Aorta (tissue), 5 donors: ENCODE measurements at regions of chr11 and their contacts with region 1.

Region 1: GRCh38 chr11:79092791-79093353 is 348.0 kb downstream of the TENM4 start:
- DNase-seq: peak in 1 of 2 donors; percentile 61
- ATAC-seq: peak; percentile 58
- H3K4me3 ChIP-seq: no peak overlapping the region
- H3K27ac ChIP-seq: no peak overlapping the region
- H3K4me1 ChIP-seq: peaks cover 0 to 4% of the 10 kb centered on the region in 2 donors
- H3K27me3 ChIP-seq: no peaks in the 10 kb centered on the region

Region 2: DNA sequence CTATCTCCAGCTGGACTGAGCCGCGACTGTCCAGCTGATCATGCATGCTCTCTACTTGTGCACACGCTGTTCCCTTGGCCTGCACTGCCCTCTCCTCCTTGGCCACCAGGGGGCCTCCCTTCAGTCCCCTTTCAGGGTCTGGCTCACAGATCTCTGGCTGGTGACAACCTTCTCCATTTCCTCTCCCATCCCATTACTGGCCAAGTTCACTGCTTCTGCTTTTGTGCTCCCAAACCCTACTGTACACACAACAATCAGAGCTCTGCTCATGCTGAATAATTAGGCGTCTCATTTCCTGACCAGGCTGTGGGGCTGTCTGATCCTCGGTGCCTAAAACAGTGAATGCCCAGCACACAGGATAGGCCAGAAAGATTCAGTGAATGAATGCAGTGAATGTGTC is 294.2 kb before region 1 on chr11:
- intact Hi-C with region 1: loop called in 1 of 2 experiments (anchors 10 kb)
- DNase-seq: peak; percentile 89 to 90
- ATAC-seq: peak; percentile 75
- H3K4me3 ChIP-seq: no peak overlapping the region
- H3K27ac ChIP-seq: no peak overlapping the region
- H3K4me1 ChIP-seq: peaks cover 0 to 6% of the 10 kb centered on the region in 2 donors
- H3K27me3 ChIP-seq: no peaks in the 10 kb centered on the region

Region 3: GRCh38 chr11:79201637-79202333 is 108.9 kb after region 1 on chr11:
- intact Hi-C with region 1: no loop called
- DNase-seq: no peak
- ATAC-seq: no peak
- H3K4me3 ChIP-seq: no peak overlapping the region
- H3K27ac ChIP-seq: no peak overlapping the region
- H3K4me1 ChIP-seq: no peaks in the 10 kb centered on the region
- H3K27me3 ChIP-seq: no peaks in the 10 kb centered on the region

Region 4: GRCh38 chr11:79244241-79244772 is 151.4 kb after region 1 on chr11:
- intact Hi-C with region 1: loop called in 1 of 2 experiments (anchors 2 kb)
- DNase-seq: no peak
- ATAC-seq: peak; percentile 78
- H3K4me3 ChIP-seq: no peak overlapping the region
- H3K27ac ChIP-seq: peak overlapping the region; percentile 2 to 82
- H3K4me1 ChIP-seq: peaks cover 2 to 8% of the 10 kb centered on the region in 2 donors
- H3K27me3 ChIP-seq: no peaks in the 10 kb centered on the region